CD8-positive, alpha-beta T cell (primary cell): ENCODE measurements at regions of chr9 and their contacts with region 1.

Region 1: GRCh38 chr9:127785023-127785932 is 556 bp upstream of the CDK9 start:
- DNase-seq: peak; percentile 85 to 97 (median 91)
- ATAC-seq: peak; percentile 53
- H3K4me3 ChIP-seq: peak overlapping the region; percentile 49 to 82
- H3K4me3 Mint-ChIP-seq: peak overlapping the region; percentile 89
- H3K27ac ChIP-seq: peak overlapping the region; percentile 73 to 94
- H3K27ac Mint-ChIP-seq: peak overlapping the region; percentile 96
- H3K4me1 ChIP-seq: peaks cover 66% of the 10 kb centered on the region
- H3K4me1 Mint-ChIP-seq: peaks cover 60% of the 10 kb centered on the region
- H3K27me3 ChIP-seq: no peaks in the 10 kb centered on the region
- H3K27me3 Mint-ChIP-seq: no peaks in the 10 kb centered on the region
- CTCF ChIP-seq: peak; percentile 74

Region 2: DNA sequence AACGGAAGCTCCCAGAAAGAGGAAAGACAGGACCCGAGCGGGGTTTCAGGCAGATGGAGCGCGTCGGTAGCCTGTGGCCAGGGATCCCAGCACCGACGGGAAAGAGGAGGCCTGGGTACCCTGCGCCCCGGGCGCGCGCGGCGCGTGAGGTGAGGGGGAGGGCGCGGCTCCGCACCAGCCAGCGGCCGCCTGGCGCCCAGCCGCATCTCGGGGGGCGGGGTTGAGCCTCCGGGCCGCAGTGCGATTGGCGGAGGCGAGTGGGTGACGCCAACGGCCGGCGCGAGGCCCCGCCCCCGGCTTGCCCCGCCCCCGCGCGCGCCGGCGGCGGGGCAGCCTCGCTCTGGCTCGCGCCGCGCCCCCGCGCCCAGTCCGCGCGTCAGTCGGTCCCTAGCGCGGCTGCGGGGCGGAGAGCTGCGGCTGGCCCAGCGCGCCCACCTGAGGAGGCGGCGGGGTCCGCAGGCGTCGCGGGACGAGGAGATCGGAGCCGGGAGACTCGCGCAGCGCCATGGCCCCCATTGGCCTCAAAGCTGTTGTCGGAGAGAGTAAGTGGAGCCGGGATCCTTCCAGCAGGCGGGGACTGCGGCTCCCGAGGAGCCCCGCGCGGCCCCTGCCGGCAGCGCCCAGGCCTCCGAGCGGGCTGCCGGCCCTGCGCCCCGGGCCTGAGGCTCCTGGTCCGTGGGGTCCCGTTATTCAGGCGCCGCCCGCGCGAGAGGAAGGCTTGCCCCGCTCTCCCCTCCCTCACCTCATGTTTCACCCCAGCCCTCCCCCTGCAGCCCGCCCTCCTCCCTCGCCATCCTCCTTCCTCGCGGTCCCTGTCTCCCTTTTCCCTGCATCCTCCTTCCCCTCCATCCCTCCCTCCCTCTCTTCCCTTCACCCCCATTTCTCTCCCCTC is 173.1 kb before region 1 on chr9 and contains the start of gene STXBP1:
- CTCF ChIA-PET with region 1: no interaction called
- POLR2A ChIA-PET with region 1: interaction called, 4 read pairs
- intact Hi-C with region 1: loop called in 1 of 2 experiments (anchors 1 kb)
- DNase-seq: peak; percentile 70 to 92 (median 83)
- ATAC-seq: peak; percentile 80
- H3K4me3 ChIP-seq: peak within 1 kb of the TSS; percentile 59 to 82
- H3K4me3 Mint-ChIP-seq: peak within 1 kb of the TSS; percentile 93
- H3K27ac ChIP-seq: peak within 1 kb of the TSS in 1 of 2 experiments; percentile 42
- H3K27ac Mint-ChIP-seq: peak within 1 kb of the TSS; percentile 92
- H3K4me1 ChIP-seq: peaks cover 32% of the 10 kb centered on the region
- H3K4me1 Mint-ChIP-seq: peaks cover 36% of the 10 kb centered on the region
- H3K27me3 ChIP-seq: peaks cover 4 to 9% of the 10 kb centered on the region in 2 experiments
- H3K27me3 Mint-ChIP-seq: peaks cover 9% of the 10 kb centered on the region
- CTCF ChIP-seq: no peak
- total RNA-seq, gene STXBP1: 7.7 to 8.9 TPM

Region 3: DNA sequence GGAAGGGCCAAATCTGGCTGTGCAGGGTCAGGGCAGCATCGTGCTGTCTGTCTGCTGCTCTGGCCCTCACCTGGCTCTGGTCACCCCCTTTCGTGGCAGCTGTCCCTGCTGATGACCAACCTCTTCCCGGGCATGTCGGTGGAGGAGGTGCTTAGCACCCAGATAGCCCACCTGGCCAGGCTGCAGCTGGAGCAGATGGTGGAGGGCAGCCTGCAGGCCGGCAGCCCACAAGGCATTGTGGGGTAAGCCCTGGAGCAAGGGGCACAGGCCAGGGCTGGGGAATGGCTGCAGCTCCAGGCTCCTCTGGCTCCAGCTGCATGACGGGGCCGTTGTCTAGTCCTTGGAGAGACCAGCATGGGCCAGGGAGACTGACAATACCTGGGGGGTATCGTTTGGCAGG is 58.4 kb before region 1 on chr9:
- CTCF ChIA-PET with region 1: no interaction called
- POLR2A ChIA-PET with region 1: no interaction called
- intact Hi-C with region 1: no loop called
- DNase-seq: no peak
- ATAC-seq: no peak
- H3K4me3 ChIP-seq: no peak overlapping the region
- H3K4me3 Mint-ChIP-seq: no peak overlapping the region
- H3K27ac ChIP-seq: no peak overlapping the region
- H3K27ac Mint-ChIP-seq: no peak overlapping the region
- H3K4me1 ChIP-seq: no peaks in the 10 kb centered on the region
- H3K4me1 Mint-ChIP-seq: peaks cover 6% of the 10 kb centered on the region
- H3K27me3 ChIP-seq: no peaks in the 10 kb centered on the region
- H3K27me3 Mint-ChIP-seq: no peaks in the 10 kb centered on the region
- CTCF ChIP-seq: no peak

Region 4: DNA sequence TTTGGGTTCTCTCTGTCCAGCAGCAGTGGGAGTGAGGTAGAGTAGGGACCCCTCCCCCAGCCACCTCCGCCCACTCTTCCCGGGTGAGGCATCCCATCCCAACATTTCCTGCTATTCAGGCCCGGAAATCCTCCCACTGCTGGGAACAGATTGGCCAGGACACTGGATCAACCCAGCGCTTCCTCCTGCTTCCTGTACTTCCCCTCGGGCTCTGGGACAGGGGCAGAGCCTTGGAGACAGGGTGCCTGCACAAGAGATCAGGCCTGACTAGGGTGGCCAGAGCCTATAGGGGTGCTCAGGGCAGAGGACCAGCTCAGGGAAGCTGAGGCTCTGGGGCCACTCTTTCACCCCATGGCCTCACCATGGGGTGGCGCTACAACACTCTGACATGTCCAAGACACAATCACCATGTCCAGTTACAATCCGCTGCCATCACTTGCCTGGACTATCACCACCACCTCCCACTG is 21.3 kb before region 1 on chr9:
- CTCF ChIA-PET with region 1: interaction called, 84 read pairs
- POLR2A ChIA-PET with region 1: interaction called, 5 read pairs
- intact Hi-C with region 1: loop called in 1 of 2 experiments (anchors 1 kb)
- DNase-seq: peak in 4 of 9 experiments; percentile 35 to 61 (median 48)
- ATAC-seq: no peak
- H3K4me3 ChIP-seq: no peak overlapping the region
- H3K4me3 Mint-ChIP-seq: no peak overlapping the region
- H3K27ac ChIP-seq: peak overlapping the region in 1 of 2 experiments; percentile 8
- H3K27ac Mint-ChIP-seq: peak overlapping the region; percentile 82
- H3K4me1 ChIP-seq: peaks cover 50% of the 10 kb centered on the region
- H3K4me1 Mint-ChIP-seq: peaks cover 60% of the 10 kb centered on the region
- H3K27me3 ChIP-seq: no peaks in the 10 kb centered on the region
- H3K27me3 Mint-ChIP-seq: no peaks in the 10 kb centered on the region
- CTCF ChIP-seq: peak; percentile 28

Region 5: GRCh38 chr9:127802576-127803443 is 17.5 kb after region 1 on chr9 and contains the start of gene FPGS:
- CTCF ChIA-PET with region 1: interaction called, 6 read pairs
- POLR2A ChIA-PET with region 1: interaction called, 14 read pairs
- intact Hi-C with region 1: loop called (anchors 1 to 2 kb)
- DNase-seq: peak; percentile 57 to 92 (median 81)
- ATAC-seq: peak; percentile 87
- H3K4me3 ChIP-seq: peak within 1 kb of the TSS; percentile 95 to 98
- H3K4me3 Mint-ChIP-seq: peak within 1 kb of the TSS; percentile 92
- H3K27ac ChIP-seq: peak within 1 kb of the TSS; percentile 89
- H3K27ac Mint-ChIP-seq: peak within 1 kb of the TSS; percentile 87
- H3K4me1 ChIP-seq: peaks cover 21% of the 10 kb centered on the region
- H3K4me1 Mint-ChIP-seq: peaks cover 38% of the 10 kb centered on the region
- H3K27me3 ChIP-seq: no peaks in the 10 kb centered on the region
- H3K27me3 Mint-ChIP-seq: no peaks in the 10 kb centered on the region
- CTCF ChIP-seq: no peak
- total RNA-seq, gene FPGS: 91.9 to 95.3 TPM

Region 6: GRCh38 chr9:127815512-127816361 is 30.5 kb after region 1 on chr9:
- CTCF ChIA-PET with region 1: no interaction called
- POLR2A ChIA-PET with region 1: no interaction called
- intact Hi-C with region 1: no loop called
- DNase-seq: no peak
- ATAC-seq: no peak
- H3K4me3 ChIP-seq: no peak overlapping the region
- H3K4me3 Mint-ChIP-seq: no peak overlapping the region
- H3K27ac ChIP-seq: no peak overlapping the region
- H3K27ac Mint-ChIP-seq: no peak overlapping the region
- H3K4me1 ChIP-seq: no peaks in the 10 kb centered on the region
- H3K4me1 Mint-ChIP-seq: no peaks in the 10 kb centered on the region
- H3K27me3 ChIP-seq: no peaks in the 10 kb centered on the region
- H3K27me3 Mint-ChIP-seq: no peaks in the 10 kb centered on the region
- CTCF ChIP-seq: no peak

Region 7: GRCh38 chr9:127904561-127905003 is 119.3 kb after region 1 on chr9:
- CTCF ChIA-PET with region 1: interaction called, 4 read pairs
- POLR2A ChIA-PET with region 1: interaction called, 3 read pairs
- intact Hi-C with region 1: loop called in 1 of 2 experiments (anchors 1 kb)
- DNase-seq: peak in 1 of 9 experiments; percentile 29
- ATAC-seq: no peak
- H3K4me3 ChIP-seq: peak overlapping the region; percentile 58 to 62
- H3K4me3 Mint-ChIP-seq: peak overlapping the region; percentile 92
- H3K27ac ChIP-seq: peak overlapping the region; percentile 95 to 100
- H3K27ac Mint-ChIP-seq: peak overlapping the region; percentile 100
- H3K4me1 ChIP-seq: peaks cover 52% of the 10 kb centered on the region
- H3K4me1 Mint-ChIP-seq: peaks cover 53% of the 10 kb centered on the region
- H3K27me3 ChIP-seq: no peaks in the 10 kb centered on the region
- H3K27me3 Mint-ChIP-seq: no peaks in the 10 kb centered on the region
- CTCF ChIP-seq: no peak